Activated T-helper 1 cell treated with anti-CD3 and anti-CD28 coated beads, Interleukin-12 subunit alpha, Interleukin-12 subunit beta, Interleukin-2, Interleukin-4 antibody, amounts not matched to agents 30 ng/mL and 10 ng/mL and 1 ng/mL, durations not matched to agents 14 hours and 24 hours and 36 hours (primary cell): ENCODE measurements at regions of chr17 and their contacts with region 1.

Region 1: DNA sequence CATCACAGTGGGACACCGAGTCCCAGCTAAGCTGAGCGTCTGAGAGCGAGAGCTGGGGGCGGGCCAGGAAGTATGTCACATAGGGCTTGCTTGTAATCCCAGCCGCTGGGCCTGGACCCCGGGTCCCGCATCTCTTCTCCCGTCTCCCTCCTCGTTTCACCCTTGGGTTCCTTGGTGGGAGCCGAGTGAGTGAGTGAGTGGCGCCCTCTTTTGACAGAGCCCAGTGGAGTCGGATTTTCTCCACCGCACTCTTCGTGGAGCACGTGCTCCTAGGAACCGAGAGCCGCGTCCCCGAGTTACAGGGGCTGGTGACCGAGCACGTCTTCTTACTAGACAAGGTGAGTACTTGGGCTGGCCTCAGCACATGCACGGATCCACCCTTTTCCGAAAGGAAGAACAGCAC is 50.8 kb upstream of the ENDOV start:
- DNase-seq: no peak
- H3K4me3 Mint-ChIP-seq: no peak overlapping the region
- H3K27ac Mint-ChIP-seq: no peak overlapping the region
- H3K4me1 Mint-ChIP-seq: no peaks in the 10 kb centered on the region
- H3K27me3 Mint-ChIP-seq: no peaks in the 10 kb centered on the region

Region 2: GRCh38 chr17:80195731-80196529 is 168.3 kb before region 1 on chr17:
- intact Hi-C with region 1: loop called (anchors 10 kb)
- DNase-seq: peak; percentile 30
- H3K4me3 Mint-ChIP-seq: no peak overlapping the region
- H3K27ac Mint-ChIP-seq: no peak overlapping the region
- H3K4me1 Mint-ChIP-seq: no peaks in the 10 kb centered on the region
- H3K27me3 Mint-ChIP-seq: peaks cover 9% of the 10 kb centered on the region

Region 3: DNA sequence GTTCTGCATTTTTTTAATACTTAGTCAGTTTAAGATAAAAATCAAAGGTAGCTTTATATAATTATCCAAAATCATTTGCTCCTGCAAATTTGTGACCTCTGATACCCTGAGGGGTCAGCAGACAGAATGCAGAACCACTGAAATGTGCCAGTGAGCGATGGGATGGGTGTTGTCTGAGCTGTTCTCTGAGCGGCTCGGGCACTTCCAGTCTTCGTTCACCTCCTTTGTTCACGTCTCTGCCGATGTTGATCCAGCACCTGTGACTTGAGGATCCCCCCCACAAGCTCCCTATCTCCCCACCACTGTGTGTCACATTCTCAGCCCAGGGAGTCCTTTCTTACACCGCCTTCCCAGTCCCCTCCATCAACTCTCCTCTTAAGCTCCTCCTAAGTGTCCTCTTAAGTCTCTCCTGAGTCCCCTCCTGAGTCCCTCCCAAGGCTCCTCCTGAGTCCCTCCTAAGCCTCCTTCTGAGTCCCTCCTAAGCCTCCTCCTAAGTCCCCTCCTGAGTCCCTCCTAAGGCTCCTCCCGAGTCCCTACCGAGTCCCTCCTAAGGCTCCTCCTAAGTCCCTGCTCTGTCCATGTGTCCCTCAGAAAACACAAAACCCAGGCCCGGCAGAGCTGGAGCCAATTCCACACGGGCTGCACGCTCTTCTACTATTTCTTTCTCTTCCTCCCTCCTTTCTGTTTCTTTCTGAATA is 56.1 kb before region 1 on chr17:
- intact Hi-C with region 1: no loop called
- DNase-seq: no peak
- H3K4me3 Mint-ChIP-seq: no peak overlapping the region
- H3K27ac Mint-ChIP-seq: peak overlapping the region; percentile 87
- H3K4me1 Mint-ChIP-seq: peaks cover 14% of the 10 kb centered on the region
- H3K27me3 Mint-ChIP-seq: no peaks in the 10 kb centered on the region

Region 4: GRCh38 chr17:80319999-80320344 is 44.2 kb before region 1 on chr17:
- intact Hi-C with region 1: loop called (anchors 5 kb)
- DNase-seq: no peak
- H3K4me3 Mint-ChIP-seq: no peak overlapping the region
- H3K27ac Mint-ChIP-seq: peak overlapping the region; percentile 61
- H3K4me1 Mint-ChIP-seq: peaks cover 26% of the 10 kb centered on the region
- H3K27me3 Mint-ChIP-seq: no peaks in the 10 kb centered on the region